ENCODE measurements at regions of chr16 and their contacts with region 1.

Region 1: GRCh38 chr16:4136229-4136813 is 20.1 kb upstream of the ADCY9 start:
- DNase-seq: peak; percentile 94
- H3K27ac ChIP-seq: peak overlapping the region; percentile 85
- CTCF ChIP-seq: no peak

Region 2: DNA sequence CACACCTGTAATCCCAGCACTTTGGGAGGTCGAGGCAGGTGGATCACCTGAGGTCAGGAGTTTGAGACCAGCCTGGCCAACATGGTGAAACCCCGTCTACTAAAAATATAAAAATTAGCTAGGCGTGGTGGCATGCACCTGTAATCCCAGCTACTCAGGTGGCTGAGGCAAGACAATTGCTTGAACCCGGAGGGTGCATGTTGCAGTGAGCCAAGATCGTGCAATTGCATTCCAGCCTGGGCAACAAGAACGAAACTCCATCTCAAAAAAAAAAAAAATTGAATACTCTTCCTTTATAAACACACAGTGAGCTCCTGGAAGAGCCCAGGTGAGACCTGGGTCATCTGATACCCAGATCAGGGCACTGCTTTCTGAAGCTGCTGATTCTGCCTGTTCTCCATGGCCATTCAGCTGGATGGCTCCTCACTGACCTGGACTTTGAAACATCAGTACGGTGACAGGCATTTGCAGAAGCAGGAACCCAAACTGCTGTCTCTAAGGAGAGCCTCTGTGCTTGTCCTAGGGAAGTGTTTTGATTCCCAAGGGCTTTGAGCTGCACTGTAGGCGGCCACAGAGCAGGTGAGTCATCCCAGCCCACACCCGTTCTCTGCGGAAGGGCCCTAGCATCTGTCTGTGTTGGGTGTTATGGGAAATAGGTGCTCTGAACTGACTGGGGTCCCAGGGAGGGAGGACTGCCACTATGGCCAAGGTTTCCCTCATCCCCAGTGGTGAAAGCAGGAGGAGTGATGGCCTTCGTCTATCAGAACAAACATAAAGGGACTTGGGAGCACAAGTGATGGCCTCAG is 40.5 kb after region 1 on chr16:
- CTCF ChIA-PET with region 1: interaction called, 3 read pairs
- POLR2A ChIA-PET with region 1: interaction called, 15 read pairs
- DNase-seq: peak; percentile 67
- H3K27ac ChIP-seq: peak overlapping the region; percentile 57
- CTCF ChIP-seq: no peak

Region 3: GRCh38 chr16:4283939-4284338 is 147.6 kb after region 1 on chr16:
- CTCF ChIA-PET with region 1: no interaction called
- POLR2A ChIA-PET with region 1: no interaction called
- DNase-seq: no peak
- H3K27ac ChIP-seq: peak overlapping the region; percentile 1; the same call in 1 of the 2 replicates
- CTCF ChIP-seq: no peak

Measured in RWPE1 (cell line).